GM18951 (cell line): ENCODE measurements at regions of chr5 and their contacts with region 1.

Region 1: GRCh38 chr5:14730881-14731280 is 66.4 kb downstream of the OTULIN start:
- POLR2A ChIP-seq: no peak

Region 2: DNA sequence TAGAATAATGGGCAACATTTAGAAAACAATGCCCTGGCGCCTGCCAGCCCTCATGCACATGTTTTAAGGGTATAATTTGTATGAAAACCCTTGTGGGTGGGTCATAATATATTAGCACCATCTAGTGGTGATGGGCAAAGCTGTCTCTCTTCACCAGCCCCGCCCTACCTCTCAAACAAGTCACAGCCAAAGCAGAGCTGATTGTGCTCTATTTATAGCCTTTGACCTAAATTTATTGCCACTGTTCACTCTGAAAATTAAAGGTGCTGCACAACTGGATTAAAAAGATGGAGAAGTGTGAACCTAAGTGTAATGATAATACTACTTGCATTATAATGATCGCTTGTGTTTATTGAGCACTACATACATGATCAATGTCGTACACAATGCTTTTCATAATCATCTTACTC is 272.6 kb after region 1 on chr5:
- in situ Hi-C with region 1: loop called (anchors 5 kb)
- POLR2A ChIP-seq: no peak